ENCODE measurements at regions of chr11 and their contacts with region 1.

Region 1: GRCh38 chr11:84345597-84345996 is 1059.4 kb upstream of the CCDC90B start:
- DNase-seq: no peak
- ATAC-seq: no peak
- H3K4me3 Mint-ChIP-seq: no peak overlapping the region
- H3K27ac Mint-ChIP-seq: no peak overlapping the region
- H3K4me1 Mint-ChIP-seq: no peaks in the 10 kb centered on the region
- H3K27me3 Mint-ChIP-seq: no peaks in the 10 kb centered on the region
- CTCF ChIP-seq: no peak

Region 2: GRCh38 chr11:84249344-84250136 is 96.1 kb before region 1 on chr11:
- CTCF ChIA-PET with region 1: no interaction called
- POLR2A ChIA-PET with region 1: no interaction called
- DNase-seq: no peak
- ATAC-seq: no peak
- H3K4me3 Mint-ChIP-seq: no peak overlapping the region
- H3K27ac Mint-ChIP-seq: no peak overlapping the region
- H3K4me1 Mint-ChIP-seq: peaks cover 3% of the 10 kb centered on the region; the same call in 1 of the 2 replicates
- H3K27me3 Mint-ChIP-seq: no peaks in the 10 kb centered on the region
- CTCF ChIP-seq: no peak

Region 3: DNA sequence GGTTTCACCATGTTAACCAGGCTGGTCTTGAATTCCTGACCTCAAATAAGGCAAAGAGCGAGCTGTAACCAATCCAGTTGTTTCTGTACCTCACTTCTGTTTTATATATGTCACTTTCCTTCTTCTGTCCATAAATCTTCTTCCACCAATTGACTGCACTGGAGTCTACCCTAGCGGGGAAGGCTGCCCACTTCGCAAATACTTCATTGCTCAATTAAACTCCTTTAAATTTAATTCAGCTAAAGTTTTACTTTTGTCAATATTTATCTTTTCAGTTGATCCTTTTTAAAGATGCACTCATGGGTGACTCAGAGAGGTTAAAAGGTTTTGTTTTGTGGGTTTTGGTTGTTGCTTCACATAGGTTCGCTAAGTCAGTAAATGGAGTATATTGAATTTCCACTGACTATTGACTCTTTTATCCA is 684.3 kb after region 1 on chr11:
- CTCF ChIA-PET with region 1: no interaction called
- POLR2A ChIA-PET with region 1: interaction called, 13 read pairs
- DNase-seq: no peak
- ATAC-seq: no peak
- H3K4me3 Mint-ChIP-seq: no peak overlapping the region
- H3K27ac Mint-ChIP-seq: no peak overlapping the region
- H3K4me1 Mint-ChIP-seq: peaks cover 4% of the 10 kb centered on the region
- H3K27me3 Mint-ChIP-seq: no peaks in the 10 kb centered on the region
- CTCF ChIP-seq: no peak

Measured in WTC11 (cell line).